ENCODE measurements at regions of chr20 and their contacts with region 1.

Region 1: GRCh38 chr20:25057234-25058050 is 497 bp downstream of the ACSS1 start:
- DNase-seq: peak in 1 of 2 donors; percentile 59
- H3K4me3 ChIP-seq: peak overlapping the region; percentile 78 to 91 (median 84)
- H3K27ac ChIP-seq: peak overlapping the region; percentile 90 to 96
- H3K4me1 ChIP-seq: peaks cover 16 to 21% of the 10 kb centered on the region in 2 donors
- H3K27me3 ChIP-seq: no peaks in the 10 kb centered on the region
- CTCF ChIP-seq: no peak
- POLR2A ChIP-seq: peak; percentile 16

Region 2: GRCh38 chr20:24992487-24993205 is 64.8 kb before region 1 on chr20 and contains the start of gene APMAP:
- intact Hi-C with region 1: loop called (anchors 5 kb)
- DNase-seq: peak; percentile 93 to 96
- H3K4me3 ChIP-seq: peak within 1 kb of the TSS; percentile 79 to 85 (median 85)
- H3K27ac ChIP-seq: peak within 1 kb of the TSS; percentile 96 to 97
- H3K4me1 ChIP-seq: peaks cover 3 to 15% of the 10 kb centered on the region in 2 donors
- H3K27me3 ChIP-seq: no peaks in the 10 kb centered on the region
- CTCF ChIP-seq: no peak
- POLR2A ChIP-seq: peak; percentile 97
- total RNA-seq, gene APMAP: 83.2 to 184 (median 101) TPM

Region 3: GRCh38 chr20:25073544-25073943 is 16.1 kb after region 1 on chr20:
- intact Hi-C with region 1: loop called (anchors 1 kb)
- DNase-seq: peak in 1 of 2 donors; percentile 16
- H3K4me3 ChIP-seq: no peak overlapping the region
- H3K27ac ChIP-seq: no peak overlapping the region
- H3K4me1 ChIP-seq: no peaks in the 10 kb centered on the region
- H3K27me3 ChIP-seq: peaks cover 0 to 17% of the 10 kb centered on the region in 2 donors
- CTCF ChIP-seq: no peak
- POLR2A ChIP-seq: no peak

Measured in breast epithelium (tissue), 4 donors.